ENCODE measurements at regions of chr2 and their contacts with region 1.

Region 1: DNA sequence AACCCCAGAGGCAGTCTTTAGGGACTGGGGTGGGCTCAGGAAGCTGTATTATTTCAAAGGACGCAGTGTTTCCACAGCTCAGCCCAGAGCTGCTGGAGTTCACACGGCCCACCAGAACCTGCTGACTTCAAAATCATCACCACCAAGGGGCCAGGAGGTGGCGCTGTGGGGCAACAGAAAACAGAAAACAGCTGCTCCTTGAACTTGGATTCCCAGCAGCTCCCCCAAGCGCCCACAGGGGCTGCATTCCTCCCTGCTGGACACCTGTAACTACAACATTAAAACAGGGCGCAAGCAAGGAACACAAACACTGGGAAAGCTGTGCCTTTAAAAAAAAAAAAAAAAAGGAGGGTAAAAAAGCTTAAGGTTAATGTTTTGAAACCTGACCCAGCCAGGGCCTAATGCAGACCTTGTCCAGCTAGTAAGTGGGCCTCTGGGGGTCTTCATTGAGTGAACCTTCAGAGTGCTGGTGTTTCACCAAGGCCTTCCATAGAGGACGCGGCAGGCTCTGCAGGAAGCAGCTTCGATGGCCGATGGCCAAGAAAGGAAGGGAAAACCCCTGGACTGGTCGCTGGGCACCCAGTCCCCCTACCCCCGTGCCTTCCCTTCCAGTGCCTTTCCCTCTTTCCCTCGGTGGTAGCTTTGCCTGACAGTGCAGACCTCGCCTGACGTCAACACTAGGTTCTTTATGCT is 25.9 kb downstream of the MLPH start:
- DNase-seq: peak; percentile 88
- ATAC-seq: peak; percentile 80 to 82
- H3K4me3 ChIP-seq: no peak overlapping the region
- H3K27ac ChIP-seq: peak overlapping the region; percentile 74
- H3K4me1 ChIP-seq: peaks cover 54% of the 10 kb centered on the region
- H3K27me3 ChIP-seq: no peaks in the 10 kb centered on the region
- CTCF ChIP-seq: peak; percentile 87

Region 2: GRCh38 chr2:237572021-237572741 is 59.3 kb after region 1 on chr2:
- intact Hi-C with region 1: loop called (anchors 5 kb)
- DNase-seq: peak; percentile 93
- ATAC-seq: peak; percentile 90 to 92
- H3K4me3 ChIP-seq: no peak overlapping the region
- H3K27ac ChIP-seq: no peak overlapping the region
- H3K4me1 ChIP-seq: peaks cover 19% of the 10 kb centered on the region
- H3K27me3 ChIP-seq: no peaks in the 10 kb centered on the region
- CTCF ChIP-seq: peak; percentile 99

Measured in lower lobe of right lung (tissue), 2 donors.